Cardiac septum (tissue), 1 donor: ENCODE measurements at regions of chr3 and their contacts with region 1.

Region 1: DNA sequence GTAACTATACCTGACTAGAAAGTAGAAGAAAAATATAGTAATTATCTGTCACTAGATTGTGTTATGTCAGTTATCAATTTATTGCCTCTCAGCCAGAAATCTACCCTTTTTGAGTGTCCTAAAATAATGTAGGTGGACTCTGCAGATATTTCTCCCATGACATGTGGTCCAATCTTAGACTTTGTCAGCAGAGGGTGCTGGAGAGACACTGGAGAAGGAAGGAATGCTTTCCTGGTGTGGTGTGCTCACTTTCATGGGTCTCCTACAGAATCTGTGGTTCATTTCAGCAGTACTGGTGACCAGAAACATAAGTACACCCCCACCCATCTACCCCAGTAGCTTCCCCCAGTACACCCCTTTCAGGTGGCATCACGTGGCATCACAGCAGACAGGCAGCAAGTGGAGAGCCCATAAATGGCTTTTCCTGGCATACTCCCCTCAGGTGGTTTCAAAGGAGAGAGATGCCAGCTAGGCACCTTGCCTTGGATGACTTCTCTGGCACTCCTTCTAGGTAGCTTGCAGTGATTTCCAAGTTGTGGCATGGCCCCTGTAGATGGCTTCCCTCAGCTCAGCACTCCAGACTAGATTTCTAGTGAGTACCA is 114.7 kb downstream of the GADL1 start:
- DNase-seq: no peak

Region 2: DNA sequence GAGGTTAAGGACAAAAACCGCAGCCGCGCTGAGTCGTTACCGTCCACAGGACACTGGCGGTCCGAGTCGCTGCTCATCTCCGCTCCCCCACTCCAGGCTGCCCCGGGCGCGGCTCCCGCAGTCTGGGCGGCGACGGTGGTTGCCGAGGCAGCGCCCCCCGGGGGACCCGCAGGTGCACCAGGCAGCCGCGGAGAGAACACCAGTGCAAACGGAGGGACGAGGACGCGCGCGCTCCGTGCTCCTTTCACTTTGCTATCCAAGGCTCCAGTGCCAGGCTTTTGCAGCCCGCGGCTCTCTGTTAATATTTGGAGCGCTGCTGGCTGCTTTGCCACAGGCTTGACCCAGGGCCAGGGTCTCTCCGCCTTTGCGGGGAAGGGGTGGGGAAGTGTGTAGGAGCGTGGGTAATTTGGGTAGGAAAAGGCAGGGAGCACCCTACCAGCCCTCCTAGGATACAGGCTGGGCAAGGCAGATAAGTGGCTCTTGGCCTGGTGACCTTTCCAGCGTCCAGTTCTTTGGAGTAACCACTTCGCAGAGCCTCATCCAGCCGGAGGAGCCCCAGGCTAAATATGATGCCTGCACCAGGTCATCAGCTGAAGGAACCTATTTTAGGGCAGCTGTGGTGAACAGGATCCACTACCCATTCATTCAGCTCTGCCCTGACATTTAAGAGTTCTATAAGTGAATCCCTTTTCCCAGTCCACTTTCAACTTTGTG is 114.9 kb after region 1 on chr3 and contains the start of gene GADL1:
- intact Hi-C with region 1: loop called (anchors 10 kb)
- DNase-seq: no peak
- total RNA-seq, gene GADL1: 0.62 TPM

Region 3: GRCh38 chr3:31010491-31010890 is 230.7 kb after region 1 on chr3:
- intact Hi-C with region 1: loop called (anchors 5 kb)
- DNase-seq: no peak

Region 4: DNA sequence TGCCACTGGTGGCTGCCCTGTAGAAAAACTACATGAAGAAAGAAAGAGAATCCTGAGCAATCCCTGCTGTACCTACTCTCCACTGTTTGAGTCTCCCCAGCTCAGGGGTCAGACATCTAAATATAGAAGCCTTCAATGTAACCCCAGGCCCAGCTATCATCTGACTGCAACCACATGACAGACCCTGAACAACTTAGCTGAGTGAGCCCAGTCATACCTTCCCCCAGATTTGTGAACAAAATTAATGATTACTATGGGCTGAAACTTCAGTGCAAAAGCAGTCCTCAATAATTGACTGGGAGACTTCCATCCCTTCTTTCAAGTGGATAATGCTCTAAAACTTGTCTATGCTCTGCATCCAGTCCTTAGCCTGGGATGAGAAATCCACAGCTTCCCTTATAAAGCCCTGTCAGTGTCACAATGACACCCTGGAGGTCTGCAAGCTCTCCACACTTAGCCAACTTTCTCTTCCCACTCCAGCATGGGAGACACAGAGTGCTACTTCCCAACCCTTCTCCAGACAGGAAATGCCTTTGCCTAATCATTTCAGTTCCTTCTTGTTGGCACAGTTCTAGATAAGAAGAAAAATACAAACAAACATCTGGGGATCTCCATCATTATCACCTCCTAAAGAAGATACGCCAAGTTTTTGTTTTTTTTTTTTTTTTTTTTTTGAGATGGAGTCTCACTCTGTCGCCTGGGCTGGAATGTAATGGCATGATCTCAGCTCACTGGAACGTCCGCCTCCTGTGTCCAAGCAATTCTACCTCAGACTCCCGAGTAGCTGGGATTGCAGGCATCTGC is 313.2 kb after region 1 on chr3:
- intact Hi-C with region 1: no loop called
- DNase-seq: no peak

Region 5: GRCh38 chr3:31132132-31132769 is 352.5 kb after region 1 on chr3:
- intact Hi-C with region 1: loop called (anchors 5 kb)
- DNase-seq: no peak

Region 6: DNA sequence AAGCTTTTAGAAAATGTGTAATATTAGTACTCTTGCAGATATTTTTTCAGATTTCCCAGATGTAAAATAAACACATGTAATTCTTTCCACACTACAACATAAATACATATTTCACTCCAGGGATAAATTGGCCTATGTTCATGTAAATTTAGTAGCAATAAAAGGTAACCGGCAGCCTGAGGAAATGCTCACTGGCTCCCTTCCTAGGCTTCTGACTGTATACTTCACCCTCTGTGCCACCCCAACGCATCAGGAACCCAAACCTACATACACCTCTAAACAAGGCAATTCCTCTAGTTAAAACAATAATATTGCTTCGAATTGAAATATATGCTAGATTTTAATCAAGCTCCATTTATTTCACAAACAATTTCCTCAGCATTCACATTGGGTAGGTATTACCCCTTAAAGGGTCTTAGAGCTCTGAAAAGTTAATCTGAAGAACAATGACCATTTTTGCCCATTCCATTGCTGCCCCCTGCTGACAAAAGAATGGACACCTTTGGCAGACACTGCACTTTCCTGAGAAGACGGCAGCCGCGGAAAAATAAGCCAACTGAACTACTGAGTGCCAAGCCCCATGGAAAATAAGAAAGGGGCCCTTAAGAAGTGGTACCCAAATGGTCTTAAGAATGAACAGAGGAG is 988.8 kb after region 1 on chr3:
- intact Hi-C with region 1: loop called (anchors 10 kb)
- DNase-seq: no peak